ENCODE measurements at regions of chr10 and their contacts with region 1.

Region 1: DNA sequence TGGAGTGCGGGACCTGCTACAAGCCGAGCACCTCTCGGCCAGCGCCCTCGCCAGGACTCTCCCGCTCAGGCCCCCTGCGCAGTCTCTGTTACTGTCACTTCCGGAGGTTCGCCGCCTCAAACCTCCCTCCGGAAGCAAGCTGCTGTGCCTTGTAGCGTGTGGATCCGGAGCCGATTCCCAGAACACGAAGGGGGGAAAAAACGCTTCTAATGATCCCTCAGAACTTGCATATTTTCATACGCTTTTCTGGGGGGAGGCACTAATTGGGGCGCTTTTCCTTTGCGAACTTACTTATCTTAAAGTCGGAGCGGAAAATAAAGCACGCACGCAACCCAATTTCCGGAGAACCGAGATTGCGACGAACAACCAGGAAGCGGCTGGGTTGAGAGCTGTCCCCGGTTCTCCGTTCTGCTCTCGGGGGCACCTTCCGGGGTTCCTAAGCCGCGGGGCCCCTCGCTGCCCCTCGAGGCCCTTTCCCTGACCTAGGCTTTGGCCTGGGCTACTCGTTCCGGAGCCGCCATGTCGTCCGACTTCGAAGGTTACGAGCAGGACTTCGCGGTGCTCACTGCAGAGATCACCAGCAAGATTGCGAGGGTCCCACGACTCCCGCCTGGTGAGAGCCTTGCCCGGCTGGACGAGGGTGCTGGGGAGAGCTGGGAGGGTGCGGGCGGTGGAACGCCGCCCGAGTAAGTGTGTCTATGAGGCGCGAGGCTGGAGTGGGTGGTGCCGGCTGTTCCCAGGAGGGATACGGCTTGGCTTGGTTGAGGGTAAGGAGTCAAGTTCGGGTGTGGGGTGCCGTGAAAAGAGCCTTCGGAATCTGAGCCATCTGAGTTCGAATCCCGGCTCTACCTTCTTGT is at the starts of genes VTI1A and ZDHHC6:
- DNase-seq: peak; percentile 79
- H3K4me3 ChIP-seq: peak within 1 kb of the TSS; percentile 89 to 98 (median 96)
- H3K27ac ChIP-seq: peak within 1 kb of the TSS; percentile 94
- H3K4me1 ChIP-seq: peaks cover 18% of the 10 kb centered on the region
- H3K27me3 ChIP-seq: no peaks in the 10 kb centered on the region
- CTCF ChIP-seq: peak in 1 of 2 donors; percentile 36
- POLR2A ChIP-seq: peak; percentile 91
- total RNA-seq, gene VTI1A: 35.6 and 36.8 TPM in 2 replicates
- total RNA-seq, gene ZDHHC6: 41.9 and 42.1 TPM in 2 replicates

Region 2: DNA sequence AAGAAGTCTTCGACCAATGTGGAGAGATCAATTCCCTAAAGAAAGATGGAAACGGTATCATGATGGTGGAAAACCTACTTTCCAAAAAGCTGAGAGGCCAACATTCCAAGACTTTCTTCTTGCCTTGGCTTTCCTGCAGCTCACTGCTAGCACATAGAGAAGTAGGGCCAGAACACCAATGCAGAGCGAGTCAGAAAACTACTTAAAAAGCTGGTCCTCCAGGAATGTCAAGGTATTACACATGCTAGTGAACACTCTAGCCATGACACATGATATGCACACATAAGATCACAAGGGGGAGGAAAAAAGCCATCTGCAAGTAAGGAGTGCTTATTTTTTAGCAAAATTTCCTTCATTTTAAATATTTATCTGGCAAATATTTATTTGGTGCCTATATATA is 286.2 kb before region 1 on chr10:
- CTCF ChIA-PET with region 1: no interaction called
- POLR2A ChIA-PET with region 1: no interaction called
- dilution Hi-C with region 1: no loop called
- intact Hi-C with region 1: loop called (anchors 5 kb)
- DNase-seq: no peak
- H3K4me3 ChIP-seq: no peak overlapping the region
- H3K27ac ChIP-seq: no peak overlapping the region
- H3K4me1 ChIP-seq: no peaks in the 10 kb centered on the region
- H3K27me3 ChIP-seq: no peaks in the 10 kb centered on the region
- CTCF ChIP-seq: no peak
- POLR2A ChIP-seq: no peak

Region 3: GRCh38 chr10:112389147-112389822 is 57.8 kb before region 1 on chr10:
- CTCF ChIA-PET with region 1: no interaction called
- POLR2A ChIA-PET with region 1: no interaction called
- dilution Hi-C with region 1: no loop called
- intact Hi-C with region 1: loop called (anchors 1 kb)
- DNase-seq: peak; percentile 85
- H3K4me3 ChIP-seq: no peak overlapping the region
- H3K27ac ChIP-seq: peak overlapping the region; percentile 85
- H3K4me1 ChIP-seq: peaks cover 18% of the 10 kb centered on the region
- H3K27me3 ChIP-seq: peaks cover 2 to 4% of the 10 kb centered on the region in 2 experiments
- CTCF ChIP-seq: no peak
- POLR2A ChIP-seq: no peak

Region 4: DNA sequence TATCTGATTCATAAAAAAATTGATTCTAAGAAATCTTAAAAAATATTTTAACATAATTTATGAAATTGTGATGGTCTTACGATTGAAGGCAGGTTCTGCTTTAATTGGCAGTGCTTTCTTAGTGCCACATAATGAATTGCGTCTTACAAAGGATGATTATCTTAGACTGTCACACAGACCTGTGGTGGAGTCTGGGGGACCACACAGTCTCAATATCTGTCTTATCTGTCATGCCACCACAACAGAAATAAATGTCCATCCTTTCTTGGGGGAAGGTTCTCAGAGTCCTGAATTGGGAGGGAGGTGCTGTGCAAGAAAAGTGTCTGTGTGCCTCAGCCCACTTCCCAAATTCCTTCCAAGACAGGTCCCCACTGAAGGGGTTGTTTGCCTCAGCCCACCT is 34.4 kb before region 1 on chr10:
- CTCF ChIA-PET with region 1: no interaction called
- POLR2A ChIA-PET with region 1: no interaction called
- dilution Hi-C with region 1: no loop called
- intact Hi-C with region 1: no loop called
- DNase-seq: no peak
- H3K4me3 ChIP-seq: no peak overlapping the region
- H3K27ac ChIP-seq: no peak overlapping the region
- H3K4me1 ChIP-seq: no peaks in the 10 kb centered on the region
- H3K27me3 ChIP-seq: no peaks in the 10 kb centered on the region
- CTCF ChIP-seq: no peak
- POLR2A ChIP-seq: no peak

Region 5: GRCh38 chr10:112465299-112465883 is 18.3 kb after region 1 on chr10:
- CTCF ChIA-PET with region 1: no interaction called
- POLR2A ChIA-PET with region 1: no interaction called
- dilution Hi-C with region 1: no loop called
- intact Hi-C with region 1: no loop called
- DNase-seq: no peak
- H3K4me3 ChIP-seq: no peak overlapping the region
- H3K27ac ChIP-seq: no peak overlapping the region
- H3K4me1 ChIP-seq: no peaks in the 10 kb centered on the region
- H3K27me3 ChIP-seq: no peaks in the 10 kb centered on the region
- CTCF ChIP-seq: no peak
- POLR2A ChIP-seq: no peak

Region 6: GRCh38 chr10:112481602-112482001 is 34.5 kb after region 1 on chr10:
- CTCF ChIA-PET with region 1: no interaction called
- POLR2A ChIA-PET with region 1: no interaction called
- dilution Hi-C with region 1: no loop called
- intact Hi-C with region 1: no loop called
- DNase-seq: no peak
- H3K4me3 ChIP-seq: no peak overlapping the region
- H3K27ac ChIP-seq: no peak overlapping the region
- H3K4me1 ChIP-seq: no peaks in the 10 kb centered on the region
- H3K27me3 ChIP-seq: no peaks in the 10 kb centered on the region
- CTCF ChIP-seq: no peak
- POLR2A ChIP-seq: no peak